Heart left ventricle (tissue), 16 donors: ENCODE measurements at regions of chr17 and their contacts with region 1.

Region 1: GRCh38 chr17:6666077-6666521 is 14.5 kb downstream of the C17orf100 start:
- DNase-seq: peak; percentile 69 to 75 (median 73)
- ATAC-seq: peak; percentile 80 to 96 (median 92)
- H3K4me3 ChIP-seq: no peak overlapping the region
- H3K27ac ChIP-seq: no peak overlapping the region
- H3K4me1 ChIP-seq: peaks cover 0 to 6% (median 0%) of the 10 kb centered on the region in 12 donors
- H3K27me3 ChIP-seq: peaks cover 0 to 22% (median 9%) of the 10 kb centered on the region in 9 donors
- CTCF ChIP-seq: peak; percentile 77 to 95 (median 90)
- POLR2A ChIP-seq: no peak

Region 2: DNA sequence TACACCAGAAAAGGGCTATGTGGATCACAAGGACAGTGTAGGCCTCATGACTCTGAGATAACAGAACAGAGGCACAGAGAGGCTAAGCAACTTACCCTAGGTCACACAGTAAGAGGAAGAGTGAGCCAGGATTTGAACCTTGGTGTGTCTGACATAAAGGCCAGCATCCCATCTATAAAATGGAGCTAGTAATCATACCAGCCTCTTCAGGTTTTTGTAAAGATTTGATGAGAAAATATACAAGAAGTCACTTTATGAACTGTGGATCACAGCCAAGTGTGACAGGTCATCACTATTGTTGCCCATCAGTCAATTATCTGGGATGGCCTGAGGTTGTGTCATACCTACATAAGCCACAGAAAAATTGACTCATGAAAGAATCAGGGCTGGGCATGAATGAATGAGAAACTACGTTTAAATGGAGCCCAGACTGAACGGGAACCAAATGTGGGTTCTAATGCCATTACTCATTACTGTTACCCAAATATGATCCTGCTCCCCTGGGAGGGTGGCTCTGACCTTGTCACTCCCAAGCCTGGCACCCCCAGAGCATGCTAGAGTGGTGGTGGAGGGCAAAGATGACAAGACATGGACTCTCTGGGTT is 130.9 kb after region 1 on chr17:
- intact Hi-C with region 1: loop called in 1 of 10 experiments (anchors 10 kb)
- DNase-seq: no peak
- ATAC-seq: no peak
- H3K4me3 ChIP-seq: no peak overlapping the region
- H3K27ac ChIP-seq: no peak overlapping the region
- H3K4me1 ChIP-seq: no peaks in the 10 kb centered on the region
- H3K27me3 ChIP-seq: peaks cover 0 to 15% (median 2%) of the 10 kb centered on the region in 9 donors
- CTCF ChIP-seq: no peak
- POLR2A ChIP-seq: no peak

Region 3: GRCh38 chr17:6843241-6843880 is 177.3 kb after region 1 on chr17:
- intact Hi-C with region 1: loop called in 9 of 10 experiments (anchors 2 to 10 kb)
- DNase-seq: no peak
- ATAC-seq: peak in 1 of 4 donors; percentile 49
- H3K4me3 ChIP-seq: peak overlapping the region in 2 of 12 donors; percentile 5
- H3K27ac ChIP-seq: no peak overlapping the region
- H3K4me1 ChIP-seq: peaks cover 0 to 6% (median 0%) of the 10 kb centered on the region in 12 donors
- H3K27me3 ChIP-seq: peaks cover 0 to 41% (median 2%) of the 10 kb centered on the region in 9 donors
- CTCF ChIP-seq: peak; percentile 44 to 69 (median 54)
- POLR2A ChIP-seq: no peak

Region 4: GRCh38 chr17:6913608-6914443 is 247.7 kb after region 1 on chr17:
- intact Hi-C with region 1: loop called in 1 of 10 experiments (anchors 10 kb)
- DNase-seq: peak; percentile 72 to 81 (median 76)
- ATAC-seq: peak; percentile 77 to 90 (median 82)
- H3K4me3 ChIP-seq: peak overlapping the region in 9 of 12 donors; percentile 16 to 50 (median 37)
- H3K27ac ChIP-seq: no peak overlapping the region
- H3K4me1 ChIP-seq: peaks cover 0 to 11% (median 6%) of the 10 kb centered on the region in 12 donors
- H3K27me3 ChIP-seq: peaks cover 0 to 12% (median 0%) of the 10 kb centered on the region in 9 donors
- CTCF ChIP-seq: peak; percentile 77 to 88 (median 84)
- POLR2A ChIP-seq: no peak